Mammary epithelial cell (primary cell): ENCODE measurements at regions of chr6 and their contacts with region 1.

Region 1: GRCh38 chr6:30259140-30260035 is 46.2 kb upstream of the TRIM26 start:
- DNase-seq: peak; percentile 88
- H3K4me3 ChIP-seq: peak overlapping the region; percentile 69 to 90 (median 75)
- H3K27ac ChIP-seq: peak overlapping the region; percentile 72
- H3K4me1 ChIP-seq: peaks cover 16% of the 10 kb centered on the region
- H3K27me3 ChIP-seq: no peaks in the 10 kb centered on the region
- CTCF ChIP-seq: peak; percentile 10 to 47

Region 2: GRCh38 chr6:30311101-30311500 is 51.7 kb after region 1 on chr6:
- CTCF ChIA-PET with region 1: no interaction called
- dilution Hi-C with region 1: loop called (anchors 5 kb)
- in situ Hi-C with region 1: no loop called
- intact Hi-C with region 1: no loop called
- DNase-seq: no peak
- H3K4me3 ChIP-seq: no peak overlapping the region
- H3K27ac ChIP-seq: no peak overlapping the region
- H3K4me1 ChIP-seq: no peaks in the 10 kb centered on the region
- H3K27me3 ChIP-seq: no peaks in the 10 kb centered on the region
- CTCF ChIP-seq: no peak